ENCODE measurements at regions of chrX and their contacts with region 1.

Region 1: GRCh38 chrX:10014462-10015356 is 47.6 kb downstream of the CLDN34 start:
- DNase-seq: peak; percentile 77
- H3K4me3 Mint-ChIP-seq: peak overlapping the region; percentile 69
- H3K27ac Mint-ChIP-seq: peak overlapping the region; percentile 9
- H3K4me1 Mint-ChIP-seq: peaks cover 40% of the 10 kb centered on the region
- H3K27me3 Mint-ChIP-seq: no peaks in the 10 kb centered on the region
- CTCF ChIP-seq: no peak

Region 2: GRCh38 chrX:9995855-9996339 is 18.8 kb before region 1 on chrX:
- CTCF ChIA-PET with region 1: interaction called, 14 read pairs
- POLR2A ChIA-PET with region 1: no interaction called
- intact Hi-C with region 1: no loop called
- DNase-seq: peak; percentile 85
- H3K4me3 Mint-ChIP-seq: no peak overlapping the region
- H3K27ac Mint-ChIP-seq: no peak overlapping the region
- H3K4me1 Mint-ChIP-seq: no peaks in the 10 kb centered on the region
- H3K27me3 Mint-ChIP-seq: no peaks in the 10 kb centered on the region
- CTCF ChIP-seq: peak; percentile 96

Region 3: DNA sequence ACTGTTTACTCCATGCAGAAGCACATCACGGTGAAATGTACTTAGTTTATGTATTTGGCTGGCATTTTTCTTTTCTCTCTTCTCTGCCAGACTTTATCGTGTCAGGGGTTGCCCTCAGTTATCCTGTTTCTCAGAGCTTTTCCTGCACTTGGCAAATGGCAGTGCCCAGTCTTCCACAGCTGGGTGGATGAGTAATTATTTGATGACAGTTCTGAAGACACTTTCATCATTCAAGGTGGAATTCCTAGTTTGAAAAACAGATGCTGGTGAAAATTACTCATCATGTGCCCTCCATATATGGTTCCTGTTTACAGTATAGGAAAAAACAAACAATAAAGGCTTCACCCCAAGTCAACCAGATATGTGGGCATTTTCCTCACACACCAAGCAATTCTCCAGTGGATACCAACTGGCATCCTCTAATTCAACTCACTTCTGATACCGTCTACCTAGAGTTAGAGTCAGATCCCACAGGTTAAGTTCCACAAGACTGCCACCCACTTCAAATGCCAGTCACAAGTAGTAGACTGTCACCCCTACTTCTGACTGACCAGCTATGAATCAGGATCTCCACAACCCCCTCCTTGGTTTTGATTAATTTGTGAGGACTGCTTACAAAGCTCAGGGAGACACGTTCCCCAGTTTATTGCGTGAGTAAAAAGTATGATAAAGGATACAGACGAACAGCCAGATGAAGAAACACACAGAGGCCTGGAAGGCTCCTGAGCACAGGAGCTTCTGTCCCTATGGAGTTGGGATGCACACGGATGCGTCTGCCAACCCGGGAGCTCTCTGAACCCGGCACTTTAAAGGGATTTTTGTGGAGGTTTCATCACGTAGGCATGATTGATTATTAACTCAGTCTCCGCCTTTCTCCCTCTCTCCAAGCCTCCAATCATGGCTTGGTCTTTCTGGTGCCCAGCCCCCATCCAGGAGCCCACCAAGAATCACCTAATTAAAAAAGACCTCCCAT is 25.4 kb after region 1 on chrX:
- CTCF ChIA-PET with region 1: no interaction called
- POLR2A ChIA-PET with region 1: interaction called, 7 read pairs
- intact Hi-C with region 1: loop called (anchors 1 kb)
- DNase-seq: peak; percentile 61
- H3K4me3 Mint-ChIP-seq: no peak overlapping the region
- H3K27ac Mint-ChIP-seq: peak overlapping the region; percentile 62
- H3K4me1 Mint-ChIP-seq: peaks cover 9% of the 10 kb centered on the region
- H3K27me3 Mint-ChIP-seq: no peaks in the 10 kb centered on the region
- CTCF ChIP-seq: no peak

Region 4: DNA sequence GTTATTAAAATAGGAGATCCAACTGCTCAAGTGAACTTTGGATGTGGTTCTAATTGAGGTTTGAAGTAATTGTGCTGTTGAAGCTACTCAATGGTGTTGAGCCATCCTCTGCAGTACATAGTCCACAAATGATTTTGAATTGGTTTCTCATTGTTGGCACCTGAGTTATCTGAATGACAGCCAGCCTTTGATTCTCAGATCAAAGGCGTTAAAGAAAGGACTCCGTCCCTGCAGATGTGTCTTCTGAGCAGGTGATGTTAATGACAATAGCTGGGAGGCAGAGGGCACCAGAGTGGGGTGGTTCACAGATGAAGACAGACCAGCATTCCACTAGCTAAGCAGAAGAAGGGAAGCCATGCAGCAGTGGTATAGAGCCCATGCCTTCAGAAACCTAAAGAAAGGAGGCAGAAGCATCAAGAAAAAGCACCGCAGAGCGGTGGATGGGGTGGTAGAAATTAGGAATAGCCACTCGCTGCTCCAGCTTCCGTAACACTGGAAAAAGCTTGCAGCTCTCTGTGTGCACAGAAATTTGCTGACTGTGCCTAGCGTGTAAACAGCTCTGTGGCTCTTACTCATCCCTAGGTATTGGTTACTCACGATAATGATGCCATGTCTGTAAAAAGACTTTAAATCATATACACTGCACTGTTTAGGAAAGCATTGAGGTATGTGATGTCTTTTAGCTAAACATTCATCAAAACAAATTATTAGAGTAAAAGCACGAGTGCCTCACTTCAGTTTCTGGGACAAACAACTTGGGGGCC is 62.9 kb after region 1 on chrX:
- CTCF ChIA-PET with region 1: interaction called, 3 read pairs
- POLR2A ChIA-PET with region 1: interaction called, 29 read pairs
- intact Hi-C with region 1: loop called (anchors 5 kb)
- DNase-seq: peak; percentile 39
- H3K4me3 Mint-ChIP-seq: no peak overlapping the region
- H3K27ac Mint-ChIP-seq: no peak overlapping the region
- H3K4me1 Mint-ChIP-seq: no peaks in the 10 kb centered on the region
- H3K27me3 Mint-ChIP-seq: no peaks in the 10 kb centered on the region
- CTCF ChIP-seq: no peak

Region 5: DNA sequence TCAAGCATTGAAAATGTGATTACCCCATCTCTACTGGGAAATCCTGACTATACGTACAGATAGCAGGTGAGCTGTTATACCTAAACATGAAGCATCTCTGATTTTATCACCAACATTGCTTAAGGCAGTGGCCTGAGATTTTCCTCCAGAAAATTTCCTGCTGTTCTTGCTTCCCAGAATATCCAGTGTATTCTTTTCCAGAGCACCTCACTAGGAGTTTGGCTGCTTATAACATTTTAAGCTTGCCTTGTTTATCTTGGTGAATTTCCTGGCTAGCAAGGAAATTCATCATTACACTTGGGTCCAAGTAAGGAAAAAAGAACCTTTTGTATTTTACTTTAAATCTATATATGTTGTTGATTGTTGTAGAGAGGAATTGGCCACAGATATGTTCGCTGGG is 69.1 kb after region 1 on chrX:
- CTCF ChIA-PET with region 1: interaction called, 3 read pairs
- POLR2A ChIA-PET with region 1: interaction called, 11 read pairs
- intact Hi-C with region 1: loop called (anchors 5 kb)
- DNase-seq: no peak
- H3K4me3 Mint-ChIP-seq: no peak overlapping the region
- H3K27ac Mint-ChIP-seq: no peak overlapping the region
- H3K4me1 Mint-ChIP-seq: peaks cover 5% of the 10 kb centered on the region
- H3K27me3 Mint-ChIP-seq: no peaks in the 10 kb centered on the region
- CTCF ChIP-seq: no peak

Measured in MCF 10A (cell line).